Mammary epithelial cell (primary cell): ENCODE measurements at regions of chr7 and their contacts with region 1.

Region 1: GRCh38 chr7:27235387-27236311 is 7.0 kb upstream of the EVX1 start:
- DNase-seq: peak; percentile 37
- H3K4me3 ChIP-seq: peak overlapping the region; percentile 39 to 55 (median 45)
- H3K27ac ChIP-seq: no peak overlapping the region
- H3K4me1 ChIP-seq: peaks cover 8% of the 10 kb centered on the region
- H3K27me3 ChIP-seq: peaks cover 23% of the 10 kb centered on the region
- CTCF ChIP-seq: peak in 1 of 2 donors; percentile 56

Region 2: GRCh38 chr7:27576360-27576944 is 340.8 kb after region 1 on chr7:
- CTCF ChIA-PET with region 1: no interaction called
- dilution Hi-C with region 1: no loop called
- in situ Hi-C with region 1: no loop called
- intact Hi-C with region 1: loop called (anchors 1 kb)
- DNase-seq: peak; percentile 20
- H3K4me3 ChIP-seq: no peak overlapping the region
- H3K27ac ChIP-seq: no peak overlapping the region
- H3K4me1 ChIP-seq: no peaks in the 10 kb centered on the region
- H3K27me3 ChIP-seq: no peaks in the 10 kb centered on the region
- CTCF ChIP-seq: peak; percentile 49 to 50

Region 3: GRCh38 chr7:27921081-27921836 is 685.6 kb after region 1 on chr7:
- CTCF ChIA-PET with region 1: no interaction called
- dilution Hi-C with region 1: no loop called
- in situ Hi-C with region 1: no loop called
- intact Hi-C with region 1: loop called (anchors 1 kb)
- DNase-seq: peak; percentile 56
- H3K4me3 ChIP-seq: no peak overlapping the region
- H3K27ac ChIP-seq: no peak overlapping the region
- H3K4me1 ChIP-seq: peaks cover 23% of the 10 kb centered on the region
- H3K27me3 ChIP-seq: no peaks in the 10 kb centered on the region
- CTCF ChIP-seq: peak; percentile 32 to 55